Activated naive CD4-positive, alpha-beta T cell treated with anti-CD3 and anti-CD28 coated beads for 36 hours (primary cell): ENCODE measurements at regions of chr19 and their contacts with region 1.

Region 1: DNA sequence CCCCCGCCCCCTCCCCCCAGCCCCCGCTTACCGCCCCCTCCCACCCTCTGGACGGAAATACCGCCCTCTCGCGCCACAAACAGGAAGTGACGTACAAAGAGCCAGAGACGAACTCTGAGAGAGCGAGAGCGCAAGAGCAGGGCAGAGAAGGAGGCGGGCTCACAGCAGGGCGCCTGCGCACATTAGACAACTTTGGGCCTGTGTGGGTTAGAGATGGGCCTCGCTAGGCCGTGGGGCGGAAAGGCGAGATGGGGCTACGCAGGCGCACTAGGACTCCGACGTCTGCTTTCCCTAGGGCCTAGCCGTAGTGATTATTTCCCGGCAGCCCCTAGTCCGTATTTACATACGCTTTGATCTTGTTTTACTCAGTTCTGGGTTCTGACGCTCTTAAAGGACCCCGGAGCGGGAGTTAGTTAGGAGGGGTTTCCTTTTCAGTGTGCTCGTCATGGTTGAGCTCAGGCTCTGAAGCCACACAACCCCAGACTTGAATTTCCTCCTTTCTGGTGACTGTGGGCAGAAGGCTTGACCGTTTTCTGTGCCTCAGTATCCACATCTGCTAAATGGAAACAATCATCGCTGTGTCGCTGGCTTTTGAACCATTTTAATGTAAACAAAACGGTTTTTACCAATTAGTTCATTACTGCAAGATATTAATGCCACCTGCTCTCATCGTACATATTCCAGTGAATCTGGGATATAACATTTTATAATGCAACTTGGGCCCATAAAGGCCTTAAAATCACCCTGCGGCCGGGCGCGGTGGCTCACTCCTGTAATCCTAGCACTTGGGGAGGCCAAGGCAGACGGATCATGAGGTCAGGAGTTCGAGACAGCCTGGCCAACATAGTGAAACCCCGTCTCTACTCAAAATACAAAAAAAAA is 449 bp upstream of the AKT2 start:
- DNase-seq: peak; percentile 99
- H3K4me3 Mint-ChIP-seq: peak overlapping the region; percentile 97
- H3K27ac Mint-ChIP-seq: peak overlapping the region; percentile 99
- H3K4me1 Mint-ChIP-seq: peaks cover 47% of the 10 kb centered on the region
- H3K27me3 Mint-ChIP-seq: no peaks in the 10 kb centered on the region

Region 2: GRCh38 chr19:40139533-40140287 is 145.9 kb before region 1 on chr19:
- CTCF ChIA-PET with region 1: no interaction called
- intact Hi-C with region 1: loop called (anchors 2 kb)
- DNase-seq: no peak
- H3K4me3 Mint-ChIP-seq: no peak overlapping the region
- H3K27ac Mint-ChIP-seq: no peak overlapping the region
- H3K4me1 Mint-ChIP-seq: peaks cover 17% of the 10 kb centered on the region
- H3K27me3 Mint-ChIP-seq: peaks cover 5% of the 10 kb centered on the region

Region 3: GRCh38 chr19:40221858-40222837 is 63.4 kb before region 1 on chr19:
- CTCF ChIA-PET with region 1: no interaction called
- intact Hi-C with region 1: loop called (anchors 5 kb)
- DNase-seq: peak; percentile 86
- H3K4me3 Mint-ChIP-seq: no peak overlapping the region
- H3K27ac Mint-ChIP-seq: no peak overlapping the region
- H3K4me1 Mint-ChIP-seq: peaks cover 22% of the 10 kb centered on the region
- H3K27me3 Mint-ChIP-seq: peaks cover 67% of the 10 kb centered on the region

Region 4: GRCh38 chr19:40403262-40403984 is 117.8 kb after region 1 on chr19:
- CTCF ChIA-PET with region 1: interaction called, 4 read pairs
- intact Hi-C with region 1: loop called (anchors 1 kb)
- DNase-seq: peak; percentile 91
- H3K4me3 Mint-ChIP-seq: peak overlapping the region; percentile 83
- H3K27ac Mint-ChIP-seq: peak overlapping the region; percentile 65
- H3K4me1 Mint-ChIP-seq: peaks cover 13% of the 10 kb centered on the region
- H3K27me3 Mint-ChIP-seq: no peaks in the 10 kb centered on the region

Region 5: DNA sequence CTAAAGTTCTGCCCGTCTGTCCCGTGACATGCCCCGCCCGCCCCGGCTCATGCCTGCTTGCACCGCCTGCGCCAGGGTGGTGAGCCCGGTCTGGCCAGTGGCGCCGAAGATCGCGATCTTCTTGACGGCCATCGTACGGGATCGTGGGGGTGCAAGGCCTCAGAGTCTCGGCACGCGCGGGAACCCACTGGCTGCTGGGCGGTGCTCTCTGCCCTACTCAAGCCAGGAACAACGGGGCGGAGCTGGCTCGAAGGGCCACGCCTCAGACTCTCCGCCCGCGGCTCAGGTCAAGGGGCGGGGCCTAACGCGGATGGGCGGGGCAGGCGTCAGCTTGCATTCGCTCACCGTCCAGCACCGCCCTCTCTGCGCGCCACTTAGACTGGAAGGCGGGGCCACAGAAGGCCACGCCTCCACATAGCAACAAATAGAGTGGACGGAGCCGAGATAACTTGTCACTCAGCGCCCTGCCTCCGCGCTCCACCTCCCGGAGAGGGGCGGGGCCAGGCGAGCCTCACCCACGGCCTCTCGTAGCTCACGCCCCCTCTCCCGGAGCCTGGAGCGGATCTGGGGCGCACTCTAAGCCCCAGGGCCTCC is 180.1 kb after region 1 on chr19 and contains the start of gene BLVRB:
- CTCF ChIA-PET with region 1: interaction called, 3 read pairs
- intact Hi-C with region 1: loop called (anchors 1 kb)
- DNase-seq: peak; percentile 100
- H3K4me3 Mint-ChIP-seq: peak within 1 kb of the TSS; percentile 78
- H3K27ac Mint-ChIP-seq: peak within 1 kb of the TSS; percentile 50
- H3K4me1 Mint-ChIP-seq: peaks cover 26% of the 10 kb centered on the region
- H3K27me3 Mint-ChIP-seq: peaks cover 10% of the 10 kb centered on the region
- total RNA-seq, gene BLVRB: 29.4 to 30.2 TPM

Region 6: GRCh38 chr19:40603389-40604135 is 318.0 kb after region 1 on chr19:
- CTCF ChIA-PET with region 1: no interaction called
- intact Hi-C with region 1: loop called (anchors 2 kb)
- DNase-seq: peak; percentile 98
- H3K4me3 Mint-ChIP-seq: peak overlapping the region; percentile 79
- H3K27ac Mint-ChIP-seq: no peak overlapping the region
- H3K4me1 Mint-ChIP-seq: peaks cover 67% of the 10 kb centered on the region
- H3K27me3 Mint-ChIP-seq: peaks cover 28% of the 10 kb centered on the region